Endothelial cell of umbilical vein (primary cell): ENCODE measurements at regions of chr10 and their contacts with region 1.

Region 1: GRCh38 chr10:113780681-113781250 is 29.3 kb downstream of the PLEKHS1 start:
- DNase-seq: no peak
- H3K4me3 ChIP-seq: no peak overlapping the region
- H3K27ac ChIP-seq: no peak overlapping the region
- H3K4me1 ChIP-seq: no peaks in the 10 kb centered on the region
- H3K27me3 ChIP-seq: peaks cover 0 to 3% of the 10 kb centered on the region in 2 experiments
- CTCF ChIP-seq: peak in 1 of 2 donors; percentile 13
- POLR2A ChIP-seq: no peak

Region 2: DNA sequence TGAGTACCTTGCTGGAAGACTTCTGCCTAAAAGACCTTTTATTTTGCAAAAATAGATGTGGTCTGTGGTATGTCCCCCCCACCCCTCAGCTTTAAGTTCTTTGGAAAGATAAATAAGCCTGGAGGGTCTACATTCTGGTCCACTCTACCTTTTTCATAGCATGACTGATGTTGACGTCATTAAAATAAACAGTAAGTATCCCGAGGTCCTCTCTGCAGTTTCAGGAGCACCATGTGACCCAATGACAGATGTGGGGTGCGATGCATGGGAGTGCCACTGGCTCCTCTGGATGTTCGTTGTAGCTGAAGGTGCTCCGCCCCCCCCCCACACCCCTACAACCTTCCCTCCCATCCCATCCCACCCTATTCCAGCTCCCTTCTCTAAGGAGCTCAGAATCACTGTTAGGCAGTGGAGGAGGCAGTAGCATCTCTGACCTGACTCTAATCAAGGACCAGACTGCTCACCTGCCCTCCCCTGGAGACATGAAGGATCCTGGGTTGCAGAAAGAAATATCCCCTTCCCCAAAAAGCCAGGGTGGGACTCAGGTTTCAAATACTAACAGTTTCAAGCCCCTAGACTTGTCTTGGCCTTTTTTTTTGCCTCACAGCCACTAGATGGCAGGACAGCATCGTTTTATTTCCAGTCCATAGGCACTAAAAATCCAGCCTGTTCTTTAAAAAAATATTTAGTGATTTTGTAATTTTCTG is 76.0 kb before region 1 on chr10:
- CTCF ChIA-PET with region 1: interaction called, 7 read pairs
- POLR2A ChIA-PET with region 1: no interaction called
- dilution Hi-C with region 1: no loop called
- intact Hi-C with region 1: loop called (anchors 5 kb)
- DNase-seq: peak; percentile 50
- H3K4me3 ChIP-seq: no peak overlapping the region
- H3K27ac ChIP-seq: no peak overlapping the region
- H3K4me1 ChIP-seq: peaks cover 20% of the 10 kb centered on the region
- H3K27me3 ChIP-seq: no peaks in the 10 kb centered on the region
- CTCF ChIP-seq: peak; percentile 52 to 59
- POLR2A ChIP-seq: no peak